Activated CD4-positive, alpha-beta T cell treated with anti-CD3 and anti-CD28 coated beads, Interleukin-2, amount 10 ng/mL, durations not matched to agents 7 days and 5 days (primary cell): ENCODE measurements at regions of chr9 and their contacts with region 1.

Region 1: DNA sequence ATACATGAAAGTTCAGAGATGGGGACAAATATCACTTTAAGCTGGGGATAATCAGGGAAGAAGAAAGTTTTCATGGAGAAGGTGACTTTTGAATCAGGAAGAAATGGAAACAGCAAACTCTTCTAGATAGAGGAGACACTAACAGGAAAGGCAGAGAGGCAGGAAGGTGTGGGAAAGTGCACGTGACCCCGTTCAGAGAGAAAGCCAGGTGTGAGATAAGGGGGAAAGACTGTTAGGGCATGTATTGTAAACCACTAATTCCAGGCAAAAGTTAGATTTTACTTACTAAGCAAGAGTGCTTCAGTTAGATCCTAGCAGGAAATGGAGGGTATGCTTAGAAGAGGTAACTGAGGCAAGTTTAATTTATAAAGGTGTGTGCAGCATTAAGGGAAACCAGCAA is 58.5 kb downstream of the PDCD1LG2 start:
- DNase-seq: no peak
- H3K4me3 Mint-ChIP-seq: no peak overlapping the region
- H3K27ac Mint-ChIP-seq: no peak overlapping the region
- H3K4me1 Mint-ChIP-seq: peaks cover 17% of the 10 kb centered on the region
- H3K27me3 Mint-ChIP-seq: no peaks in the 10 kb centered on the region

Region 2: GRCh38 chr9:5430915-5431314 is 138.0 kb before region 1 on chr9:
- CTCF ChIA-PET with region 1: no interaction called
- POLR2A ChIA-PET with region 1: no interaction called
- DNase-seq: no peak
- H3K4me3 Mint-ChIP-seq: no peak overlapping the region
- H3K27ac Mint-ChIP-seq: no peak overlapping the region
- H3K4me1 Mint-ChIP-seq: peaks cover under 1% of the 10 kb centered on the region
- H3K27me3 Mint-ChIP-seq: no peaks in the 10 kb centered on the region

Region 3: DNA sequence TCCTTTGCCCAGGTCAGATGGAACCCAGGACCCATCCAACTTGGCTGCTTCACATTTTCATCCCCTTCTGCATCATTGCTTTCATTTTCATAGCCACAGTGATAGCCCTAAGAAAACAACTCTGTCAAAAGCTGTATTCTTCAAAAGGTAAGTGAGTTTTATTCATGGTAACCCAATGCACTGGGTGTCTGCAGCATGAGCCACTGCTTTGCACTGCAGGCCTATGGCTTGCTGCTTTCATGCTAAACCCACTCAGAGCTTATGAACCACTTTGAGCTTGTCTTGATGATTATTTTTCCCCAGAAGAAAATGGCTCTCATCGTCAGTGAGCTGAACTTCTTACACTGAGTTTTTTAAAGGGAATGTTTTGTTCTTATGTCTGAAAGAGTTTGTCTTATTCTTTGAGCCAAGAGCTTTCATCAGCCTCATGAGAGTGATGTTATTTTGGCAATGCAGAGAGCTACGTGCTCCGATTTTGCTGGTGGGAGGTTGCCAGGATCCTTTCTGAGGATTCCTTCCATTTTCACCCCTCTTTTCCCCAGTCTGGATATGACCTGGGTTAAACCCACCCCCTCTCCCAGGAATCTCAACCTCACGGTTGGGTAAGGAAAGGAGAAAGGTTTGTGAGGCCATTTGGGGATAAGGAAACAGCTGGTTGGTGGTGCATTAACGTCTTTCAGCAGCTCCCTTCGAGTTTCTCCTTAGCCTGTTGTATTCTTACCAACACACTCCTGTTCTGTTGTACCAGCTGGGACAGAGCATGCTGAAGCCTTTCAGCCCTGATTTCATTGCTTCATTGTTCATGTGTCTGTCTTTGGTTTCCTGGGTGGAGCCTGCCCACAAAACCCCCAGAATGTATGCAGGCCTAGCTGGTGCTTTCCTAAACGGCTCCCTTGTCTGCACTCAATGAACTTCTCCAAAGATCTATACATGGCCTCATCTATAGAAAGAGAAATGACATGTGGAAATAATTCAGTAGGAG is 11.0 kb before region 1 on chr9:
- CTCF ChIA-PET with region 1: interaction called, 15 read pairs
- POLR2A ChIA-PET with region 1: no interaction called
- DNase-seq: peak; percentile 75
- H3K4me3 Mint-ChIP-seq: peak overlapping the region; percentile 38
- H3K27ac Mint-ChIP-seq: peak overlapping the region; percentile 91
- H3K4me1 Mint-ChIP-seq: peaks cover 48% of the 10 kb centered on the region
- H3K27me3 Mint-ChIP-seq: no peaks in the 10 kb centered on the region